Vagina (tissue), 2 donors: ENCODE measurements at regions of chr1 and their contacts with region 1.

Region 1: DNA sequence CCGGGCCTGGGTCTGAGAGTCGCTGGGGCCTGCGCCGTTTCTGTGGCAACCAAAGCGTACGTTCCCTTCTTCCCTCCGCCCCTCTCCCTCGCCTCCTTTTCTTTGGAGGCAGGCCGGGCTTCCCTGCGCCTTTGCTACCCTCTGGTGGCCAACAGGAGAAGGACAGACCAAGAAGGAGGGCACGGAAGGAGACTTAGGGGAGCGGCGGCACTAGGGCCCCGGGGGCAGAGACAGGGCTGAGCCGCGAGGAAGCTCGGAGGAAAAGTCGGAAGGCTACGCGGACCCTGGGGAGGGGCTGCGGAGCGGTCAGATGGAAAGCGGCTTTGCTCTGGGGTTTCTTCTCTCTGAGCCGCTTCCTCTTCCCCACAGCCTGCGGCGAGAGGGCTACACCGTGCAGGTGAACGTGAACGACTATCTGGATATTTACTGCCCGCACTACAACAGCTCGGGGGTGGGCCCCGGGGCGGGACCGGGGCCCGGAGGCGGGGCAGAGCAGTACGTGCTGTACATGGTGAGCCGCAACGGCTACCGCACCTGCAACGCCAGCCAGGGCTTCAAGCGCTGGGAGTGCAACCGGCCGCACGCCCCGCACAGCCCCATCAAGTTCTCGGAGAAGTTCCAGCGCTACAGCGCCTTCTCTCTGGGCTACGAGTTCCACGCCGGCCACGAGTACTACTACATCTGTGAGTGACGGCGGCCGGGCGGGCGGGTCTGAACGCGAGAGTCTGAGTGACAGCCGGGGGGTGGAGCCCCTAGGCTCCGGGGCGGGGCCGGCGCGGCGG is 6.3 kb downstream of the EFNA3 start:
- DNase-seq: no peak
- H3K4me3 ChIP-seq: peak overlapping the region; percentile 62 to 66
- H3K27ac ChIP-seq: peak overlapping the region; percentile 93
- H3K4me1 ChIP-seq: peaks cover 59% of the 10 kb centered on the region
- H3K27me3 ChIP-seq: peaks cover 24% of the 10 kb centered on the region
- CTCF ChIP-seq: peak; percentile 89 to 99 (median 93)
- POLR2A ChIP-seq: peak in 1 of 2 donors; percentile 2

Region 2: GRCh38 chr1:154982897-154983648 is 101.8 kb before region 1 on chr1 and contains the start of gene FLAD1:
- intact Hi-C with region 1: no loop called
- DNase-seq: peak in 1 of 2 donors; percentile 99
- H3K4me3 ChIP-seq: peak within 1 kb of the TSS; percentile 56 to 76
- H3K27ac ChIP-seq: peak within 1 kb of the TSS; percentile 66
- H3K4me1 ChIP-seq: peaks cover 24% of the 10 kb centered on the region
- H3K27me3 ChIP-seq: no peaks in the 10 kb centered on the region
- CTCF ChIP-seq: no peak
- POLR2A ChIP-seq: no peak
- total RNA-seq, gene FLAD1: 20.6 TPM

Region 3: GRCh38 chr1:155044812-155045690 is 39.9 kb before region 1 on chr1:
- intact Hi-C with region 1: loop called (anchors 5 kb)
- DNase-seq: no peak
- H3K4me3 ChIP-seq: no peak overlapping the region
- H3K27ac ChIP-seq: no peak overlapping the region
- H3K4me1 ChIP-seq: peaks cover 25% of the 10 kb centered on the region
- H3K27me3 ChIP-seq: no peaks in the 10 kb centered on the region
- CTCF ChIP-seq: peak in 2 of 3 experiments; percentile 51 to 55
- POLR2A ChIP-seq: no peak